Activated naive CD4-positive, alpha-beta T cell treated with anti-CD3 and anti-CD28 coated beads, Interleukin-2, amount 10 ng/mL, durations not matched to agents 7 days and 5 days (primary cell): ENCODE measurements at regions of chr14 and their contacts with region 1.

Region 1: GRCh38 chr14:69547701-69548348 is 26.8 kb downstream of the CCDC177 start:
- DNase-seq: peak; percentile 36
- H3K4me3 Mint-ChIP-seq: no peak overlapping the region
- H3K27ac Mint-ChIP-seq: no peak overlapping the region
- H3K4me1 Mint-ChIP-seq: peaks cover 17% of the 10 kb centered on the region
- H3K27me3 Mint-ChIP-seq: peaks cover 93% of the 10 kb centered on the region

Region 2: DNA sequence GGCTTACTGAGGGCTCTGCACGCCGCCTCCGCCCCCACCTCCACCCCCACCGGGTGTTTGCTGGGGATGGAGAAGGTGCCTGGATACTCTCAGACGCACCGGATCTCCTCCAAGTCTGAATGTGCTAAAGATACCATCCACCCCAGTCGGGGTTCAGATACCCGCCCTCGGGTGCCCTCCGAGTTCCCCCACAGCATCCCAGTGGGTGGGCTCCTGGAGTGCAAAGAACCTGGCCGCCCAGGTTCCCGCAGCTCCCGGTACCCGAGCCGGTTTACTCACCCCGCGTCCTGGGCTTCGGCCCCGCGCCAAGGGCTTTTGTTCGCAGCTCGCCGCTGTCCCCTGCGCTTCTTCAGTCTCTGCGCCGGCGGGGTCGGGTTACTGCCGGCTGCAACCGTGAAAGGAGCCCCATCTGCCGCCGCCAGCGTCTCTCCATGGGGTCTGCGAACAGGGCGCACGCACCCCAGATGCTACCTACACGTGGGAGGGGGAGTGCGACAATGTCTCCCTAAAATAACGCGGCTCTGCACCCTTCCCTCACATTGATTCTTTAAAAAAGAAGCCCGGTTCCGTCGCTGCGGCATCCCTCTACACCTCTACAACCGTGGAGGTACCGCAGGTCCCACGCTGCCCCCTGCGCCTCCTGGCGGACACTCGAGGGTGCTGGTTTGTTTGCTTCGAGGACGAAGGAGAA is 26.6 kb after region 1 on chr14 and contains the start of gene CCDC177:
- CTCF ChIA-PET with region 1: interaction called, 29 read pairs
- DNase-seq: peak; percentile 82
- H3K4me3 Mint-ChIP-seq: peak within 1 kb of the TSS; percentile 55
- H3K27ac Mint-ChIP-seq: peak within 1 kb of the TSS; percentile 38
- H3K4me1 Mint-ChIP-seq: peaks cover 15% of the 10 kb centered on the region
- H3K27me3 Mint-ChIP-seq: peaks cover 96% of the 10 kb centered on the region